Heart right ventricle (tissue), 16 donors: ENCODE measurements at regions of chr7 and their contacts with region 1.

Region 1: GRCh38 chr7:126993626-126994213 is 259.0 kb downstream of the GRM8 start:
- DNase-seq: no peak
- ATAC-seq: no peak
- H3K4me3 ChIP-seq: no peak overlapping the region
- H3K27ac ChIP-seq: no peak overlapping the region
- H3K4me1 ChIP-seq: no peaks in the 10 kb centered on the region
- H3K27me3 ChIP-seq: no peaks in the 10 kb centered on the region
- CTCF ChIP-seq: no peak

Region 2: GRCh38 chr7:127057918-127058317 is 64.2 kb after region 1 on chr7:
- intact Hi-C with region 1: loop called in 1 of 10 experiments (anchors 10 kb)
- DNase-seq: no peak
- ATAC-seq: no peak
- H3K4me3 ChIP-seq: no peak overlapping the region
- H3K27ac ChIP-seq: no peak overlapping the region
- H3K4me1 ChIP-seq: no peaks in the 10 kb centered on the region
- H3K27me3 ChIP-seq: no peaks in the 10 kb centered on the region
- CTCF ChIP-seq: no peak

Region 3: DNA sequence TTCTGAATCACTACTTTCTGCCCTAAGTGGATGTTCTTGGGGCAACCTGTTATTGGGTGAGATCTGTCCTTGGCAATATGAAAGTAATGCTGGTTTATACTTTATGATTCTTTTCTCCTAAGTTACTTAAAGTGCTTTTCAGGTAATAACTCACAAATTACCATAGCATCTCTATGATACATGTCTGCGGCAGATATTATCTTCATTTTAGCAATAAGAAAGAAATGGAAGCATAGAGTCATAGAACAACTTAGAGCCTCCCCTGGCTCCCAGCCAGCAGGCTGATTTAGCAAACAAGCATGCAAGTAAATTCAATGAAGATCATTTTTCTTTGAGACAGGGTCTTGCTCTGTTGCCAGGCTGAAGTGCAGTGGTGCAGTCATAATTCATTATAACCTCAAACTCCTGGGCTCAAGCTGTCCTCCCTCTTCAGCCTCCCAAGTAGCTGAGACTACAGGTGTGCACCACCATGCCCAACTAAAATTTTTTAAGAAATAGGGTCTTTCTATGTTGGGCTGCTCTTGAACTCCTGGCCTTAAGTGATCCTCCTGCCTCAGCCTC is 297.2 kb after region 1 on chr7:
- intact Hi-C with region 1: no loop called
- DNase-seq: no peak
- ATAC-seq: no peak
- H3K4me3 ChIP-seq: no peak overlapping the region
- H3K27ac ChIP-seq: no peak overlapping the region
- H3K4me1 ChIP-seq: no peaks in the 10 kb centered on the region
- H3K27me3 ChIP-seq: peaks cover 0 to 18% (median 0%) of the 10 kb centered on the region in 7 donors
- CTCF ChIP-seq: no peak